ENCODE measurements at regions of chr1 and their contacts with region 1.

Region 1: DNA sequence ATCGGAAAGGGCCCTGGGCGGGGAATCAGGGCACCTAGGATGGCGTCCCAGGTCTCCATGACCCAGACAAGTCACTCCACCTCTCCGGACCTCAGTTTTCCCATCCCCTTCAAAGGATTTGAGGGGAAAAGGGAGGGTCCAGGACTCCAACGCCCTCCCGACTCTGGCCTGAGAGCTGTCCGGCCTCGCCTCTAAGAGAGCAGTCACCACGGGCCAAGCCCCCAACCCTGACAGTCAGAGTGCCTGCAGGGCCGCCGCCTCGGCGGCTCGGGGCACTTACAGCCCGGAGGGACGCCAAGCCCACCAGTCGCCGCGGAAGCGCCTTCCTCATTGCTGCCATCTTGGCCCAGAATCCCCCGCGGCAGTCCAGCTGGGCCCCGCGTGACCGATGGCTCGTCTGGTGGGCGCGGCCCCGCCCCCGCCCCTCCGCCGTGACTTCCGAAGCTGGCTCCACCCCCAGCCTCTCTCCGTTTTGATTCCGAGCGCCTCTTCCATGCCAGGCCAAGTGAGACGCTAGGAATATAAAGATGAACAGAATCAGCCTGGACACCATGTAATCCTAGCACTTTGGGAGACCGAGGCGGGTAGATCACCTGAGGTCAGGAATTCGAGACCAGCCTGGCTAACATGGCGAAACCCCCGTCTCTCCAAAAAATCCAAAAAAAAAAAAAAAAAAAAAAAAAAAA is at the start of gene HMGCL:
- DNase-seq: peak; percentile 80 to 89 (median 82)
- H3K4me3 ChIP-seq: peak within 1 kb of the TSS; percentile 48 to 98
- H3K4me3 Mint-ChIP-seq: peak within 1 kb of the TSS; percentile 92 to 97 (median 94)
- H3K27ac ChIP-seq: peak within 1 kb of the TSS; percentile 80
- H3K27ac Mint-ChIP-seq: peak within 1 kb of the TSS; percentile 86 to 98 (median 96)
- H3K4me1 ChIP-seq: peaks cover 18% of the 10 kb centered on the region
- H3K4me1 Mint-ChIP-seq: peaks cover 15 to 28% (median 20%) of the 10 kb centered on the region in 4 donors
- H3K27me3 ChIP-seq: no peaks in the 10 kb centered on the region
- H3K27me3 Mint-ChIP-seq: no peaks in the 10 kb centered on the region
- total RNA-seq, gene HMGCL: 36.3 to 38.5 TPM

Region 2: DNA sequence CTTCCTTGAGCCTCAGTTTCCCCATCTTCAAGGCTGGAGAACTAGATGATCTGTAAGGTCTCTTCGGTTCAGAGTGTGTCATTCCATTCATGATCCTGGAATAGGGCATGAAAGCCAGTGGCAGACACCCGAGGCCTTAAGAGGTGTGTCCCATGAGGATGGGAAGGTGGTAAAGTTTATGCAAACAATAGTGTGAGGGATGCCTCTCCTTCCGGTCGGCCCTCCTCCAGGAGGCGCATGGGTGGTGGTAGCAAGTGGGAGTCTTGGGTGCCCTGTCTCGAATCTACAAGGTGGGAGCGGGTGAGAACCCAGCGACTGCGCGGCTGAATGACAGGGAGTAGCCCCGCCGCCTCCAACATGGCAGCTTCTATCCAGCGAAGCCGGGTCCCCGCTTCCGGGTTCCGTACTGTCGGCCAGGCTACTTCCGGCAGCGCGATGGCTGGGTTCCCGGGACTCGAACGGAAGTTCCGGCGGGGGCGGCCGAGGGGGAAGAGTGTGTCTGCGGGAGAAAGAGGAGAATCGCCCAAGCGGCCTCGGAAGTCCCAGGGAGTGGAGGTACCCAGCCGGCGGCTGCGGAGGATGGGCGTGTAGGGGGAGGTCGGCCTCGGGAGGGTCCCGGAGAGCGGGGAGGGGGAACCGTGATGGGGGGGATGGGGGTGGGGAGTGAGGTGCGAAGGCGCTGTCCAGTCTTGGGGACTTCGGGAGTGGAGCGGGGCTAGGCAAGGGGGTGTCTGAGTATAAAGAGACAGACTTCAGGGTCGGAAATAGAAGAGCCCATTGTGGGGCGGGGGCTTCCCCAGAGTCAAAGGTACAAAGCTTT is 34.3 kb before region 1 on chr1 and contains the start of gene LYPLA2:
- CTCF ChIA-PET with region 1: no interaction called
- POLR2A ChIA-PET with region 1: interaction called, 10 read pairs
- intact Hi-C with region 1: no loop called
- DNase-seq: peak; percentile 78 to 89 (median 78)
- H3K4me3 ChIP-seq: peak within 1 kb of the TSS; percentile 82 to 84
- H3K4me3 Mint-ChIP-seq: peak within 1 kb of the TSS; percentile 89 to 99 (median 98)
- H3K27ac ChIP-seq: peak within 1 kb of the TSS; percentile 70
- H3K27ac Mint-ChIP-seq: peak within 1 kb of the TSS; percentile 91 to 98 (median 97)
- H3K4me1 ChIP-seq: peaks cover 28% of the 10 kb centered on the region
- H3K4me1 Mint-ChIP-seq: peaks cover 10 to 40% (median 23%) of the 10 kb centered on the region in 4 donors
- H3K27me3 ChIP-seq: no peaks in the 10 kb centered on the region
- H3K27me3 Mint-ChIP-seq: no peaks in the 10 kb centered on the region
- total RNA-seq, gene LYPLA2: 52.6 to 55.8 TPM

Region 3: GRCh38 chr1:23800400-23801337 is 24.6 kb before region 1 on chr1 and contains the start of gene GALE:
- CTCF ChIA-PET with region 1: interaction called, 4 read pairs
- POLR2A ChIA-PET with region 1: interaction called, 51 read pairs
- intact Hi-C with region 1: loop called (anchors 1 kb)
- DNase-seq: peak; percentile 94 to 97 (median 94)
- H3K4me3 ChIP-seq: peak within 1 kb of the TSS; percentile 70 to 88
- H3K4me3 Mint-ChIP-seq: peak within 1 kb of the TSS; percentile 80 to 98 (median 92)
- H3K27ac ChIP-seq: peak within 1 kb of the TSS; percentile 92
- H3K27ac Mint-ChIP-seq: peak within 1 kb of the TSS; percentile 84 to 97 (median 94)
- H3K4me1 ChIP-seq: peaks cover 23% of the 10 kb centered on the region
- H3K4me1 Mint-ChIP-seq: peaks cover 8 to 37% (median 21%) of the 10 kb centered on the region in 4 donors
- H3K27me3 ChIP-seq: no peaks in the 10 kb centered on the region
- H3K27me3 Mint-ChIP-seq: no peaks in the 10 kb centered on the region
- total RNA-seq, gene GALE: 11.2 to 12.0 TPM

Region 4: GRCh38 chr1:23809751-23810171 is 15.5 kb before region 1 on chr1:
- CTCF ChIA-PET with region 1: interaction called, 52 read pairs
- POLR2A ChIA-PET with region 1: interaction called, 10 read pairs
- intact Hi-C with region 1: no loop called
- DNase-seq: peak; percentile 79 to 84 (median 81)
- H3K4me3 ChIP-seq: no peak overlapping the region
- H3K4me3 Mint-ChIP-seq: no peak overlapping the region
- H3K27ac ChIP-seq: no peak overlapping the region
- H3K27ac Mint-ChIP-seq: peak overlapping the region in 5 of 7 donors; percentile 12 to 80 (median 43)
- H3K4me1 ChIP-seq: peaks cover 9% of the 10 kb centered on the region
- H3K4me1 Mint-ChIP-seq: peaks cover 7 to 20% (median 15%) of the 10 kb centered on the region in 4 donors
- H3K27me3 ChIP-seq: no peaks in the 10 kb centered on the region
- H3K27me3 Mint-ChIP-seq: no peaks in the 10 kb centered on the region

Region 5: GRCh38 chr1:23845163-23845562 is 19.9 kb after region 1 on chr1:
- CTCF ChIA-PET with region 1: no interaction called
- POLR2A ChIA-PET with region 1: no interaction called
- intact Hi-C with region 1: no loop called
- DNase-seq: no peak
- H3K4me3 ChIP-seq: no peak overlapping the region
- H3K4me3 Mint-ChIP-seq: no peak overlapping the region
- H3K27ac ChIP-seq: no peak overlapping the region
- H3K27ac Mint-ChIP-seq: peak overlapping the region in 1 of 7 donors; percentile 3
- H3K4me1 ChIP-seq: no peaks in the 10 kb centered on the region
- H3K4me1 Mint-ChIP-seq: no peaks in the 10 kb centered on the region
- H3K27me3 ChIP-seq: no peaks in the 10 kb centered on the region
- H3K27me3 Mint-ChIP-seq: no peaks in the 10 kb centered on the region